ENCODE measurements at regions of chr6 and their contacts with region 1.

Region 1: DNA sequence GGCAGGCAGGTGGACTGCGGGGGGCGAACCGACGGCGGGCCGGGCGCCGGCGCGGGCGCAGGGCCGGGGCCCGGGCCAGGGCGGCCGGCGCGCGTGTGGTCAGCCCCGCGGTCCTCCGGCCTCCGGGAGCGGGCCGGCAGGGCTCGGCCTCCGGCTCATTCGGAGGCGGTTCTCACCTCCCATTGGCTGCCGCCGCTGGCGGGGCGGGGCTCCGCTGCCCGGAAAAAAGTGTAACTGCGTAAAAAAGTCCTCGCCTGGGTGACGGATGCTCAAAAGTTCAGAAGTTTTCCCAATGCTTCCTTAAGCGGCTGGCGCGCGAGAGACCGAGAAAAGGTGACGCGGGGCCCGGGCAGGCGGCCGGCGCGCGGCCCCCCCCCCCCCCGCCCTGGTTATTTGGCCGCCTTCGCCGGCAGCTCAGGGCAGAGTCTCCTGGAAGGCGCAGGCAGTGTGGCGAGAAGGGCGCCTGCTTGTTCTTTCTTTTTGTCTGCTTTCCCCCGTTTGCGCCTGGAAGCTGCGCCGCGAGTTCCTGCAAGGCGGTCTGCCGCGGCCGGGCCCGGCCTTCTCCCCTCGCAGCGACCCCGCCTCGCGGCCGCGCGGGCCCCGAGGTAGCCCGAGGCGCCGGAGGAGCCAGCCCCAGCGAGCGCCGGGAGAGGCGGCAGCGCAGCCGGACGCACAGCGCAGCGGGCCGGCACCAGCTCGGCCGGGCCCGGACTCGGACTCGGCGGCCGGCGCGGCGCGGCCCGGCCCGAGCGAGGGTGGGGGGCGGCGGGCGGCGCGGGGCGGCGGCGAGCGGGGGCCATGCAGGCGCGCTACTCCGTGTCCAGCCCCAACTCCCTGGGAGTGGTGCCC is at the start of gene FOXC1:
- DNase-seq: peak; percentile 64
- ATAC-seq: peak; percentile 56
- H3K4me3 ChIP-seq: peak within 1 kb of the TSS in 3 of 5 experiments; percentile 44 to 60 (median 54)
- H3K4me3 Mint-ChIP-seq: peak within 1 kb of the TSS; percentile 88
- H3K27ac ChIP-seq: no peak within 1 kb of the TSS
- H3K27ac Mint-ChIP-seq: peak within 1 kb of the TSS; percentile 81
- H3K4me1 ChIP-seq: peaks cover 65 to 79% of the 10 kb centered on the region in 2 donors
- H3K4me1 Mint-ChIP-seq: peaks cover 50% of the 10 kb centered on the region
- H3K27me3 ChIP-seq: peaks cover 0 to 75% (median 59%) of the 10 kb centered on the region in 4 experiments
- H3K27me3 Mint-ChIP-seq: peaks cover 58% of the 10 kb centered on the region
- CTCF ChIP-seq: no peak
- total RNA-seq, gene FOXC1: 0.39 and 0.52 TPM in 2 replicates

Region 2: GRCh38 chr6:1389369-1390132 is 220.3 kb before region 1 on chr6 and contains the start of gene FOXF2:
- CTCF ChIA-PET with region 1: no interaction called
- POLR2A ChIA-PET with region 1: no interaction called
- intact Hi-C with region 1: loop called (anchors 5 kb)
- DNase-seq: peak; percentile 35
- ATAC-seq: peak; percentile 22
- H3K4me3 ChIP-seq: peak within 1 kb of the TSS in 3 of 5 experiments; percentile 43 to 51 (median 46)
- H3K4me3 Mint-ChIP-seq: peak within 1 kb of the TSS; percentile 86
- H3K27ac ChIP-seq: no peak within 1 kb of the TSS
- H3K27ac Mint-ChIP-seq: no peak within 1 kb of the TSS
- H3K4me1 ChIP-seq: peaks cover 40 to 60% of the 10 kb centered on the region in 2 donors
- H3K4me1 Mint-ChIP-seq: peaks cover 33% of the 10 kb centered on the region
- H3K27me3 ChIP-seq: peaks cover 0 to 86% (median 61%) of the 10 kb centered on the region in 4 experiments
- H3K27me3 Mint-ChIP-seq: peaks cover 62% of the 10 kb centered on the region
- CTCF ChIP-seq: no peak
- total RNA-seq, gene FOXF2: not detected in 2 replicates

Region 3: GRCh38 chr6:1554476-1555310 is 55.2 kb before region 1 on chr6:
- CTCF ChIA-PET with region 1: no interaction called
- POLR2A ChIA-PET with region 1: no interaction called
- intact Hi-C with region 1: no loop called
- DNase-seq: peak; percentile 67
- ATAC-seq: peak; percentile 85
- H3K4me3 ChIP-seq: peak overlapping the region; percentile 14 to 62 (median 57)
- H3K4me3 Mint-ChIP-seq: peak overlapping the region; percentile 84
- H3K27ac ChIP-seq: peak overlapping the region; percentile 6 to 70
- H3K27ac Mint-ChIP-seq: peak overlapping the region; percentile 69
- H3K4me1 ChIP-seq: peaks cover 0 to 9% of the 10 kb centered on the region in 2 donors
- H3K4me1 Mint-ChIP-seq: peaks cover 10% of the 10 kb centered on the region
- H3K27me3 ChIP-seq: peaks cover 0 to 14% (median 6%) of the 10 kb centered on the region in 4 experiments
- H3K27me3 Mint-ChIP-seq: peaks cover 44% of the 10 kb centered on the region
- CTCF ChIP-seq: peak; percentile 62

Region 4: GRCh38 chr6:1624851-1625781 is 15.2 kb after region 1 on chr6:
- CTCF ChIA-PET with region 1: interaction called, 7 read pairs
- POLR2A ChIA-PET with region 1: no interaction called
- intact Hi-C with region 1: loop called (anchors 2 kb)
- DNase-seq: peak; percentile 59
- ATAC-seq: peak; percentile 34
- H3K4me3 ChIP-seq: peak overlapping the region; percentile 28 to 69 (median 37)
- H3K4me3 Mint-ChIP-seq: peak overlapping the region; percentile 88
- H3K27ac ChIP-seq: no peak overlapping the region
- H3K27ac Mint-ChIP-seq: no peak overlapping the region
- H3K4me1 ChIP-seq: peaks cover 28 to 32% of the 10 kb centered on the region in 2 donors
- H3K4me1 Mint-ChIP-seq: peaks cover 18% of the 10 kb centered on the region
- H3K27me3 ChIP-seq: peaks cover 0 to 80% (median 57%) of the 10 kb centered on the region in 4 experiments
- H3K27me3 Mint-ChIP-seq: peaks cover 65% of the 10 kb centered on the region
- CTCF ChIP-seq: no peak

Region 5: DNA sequence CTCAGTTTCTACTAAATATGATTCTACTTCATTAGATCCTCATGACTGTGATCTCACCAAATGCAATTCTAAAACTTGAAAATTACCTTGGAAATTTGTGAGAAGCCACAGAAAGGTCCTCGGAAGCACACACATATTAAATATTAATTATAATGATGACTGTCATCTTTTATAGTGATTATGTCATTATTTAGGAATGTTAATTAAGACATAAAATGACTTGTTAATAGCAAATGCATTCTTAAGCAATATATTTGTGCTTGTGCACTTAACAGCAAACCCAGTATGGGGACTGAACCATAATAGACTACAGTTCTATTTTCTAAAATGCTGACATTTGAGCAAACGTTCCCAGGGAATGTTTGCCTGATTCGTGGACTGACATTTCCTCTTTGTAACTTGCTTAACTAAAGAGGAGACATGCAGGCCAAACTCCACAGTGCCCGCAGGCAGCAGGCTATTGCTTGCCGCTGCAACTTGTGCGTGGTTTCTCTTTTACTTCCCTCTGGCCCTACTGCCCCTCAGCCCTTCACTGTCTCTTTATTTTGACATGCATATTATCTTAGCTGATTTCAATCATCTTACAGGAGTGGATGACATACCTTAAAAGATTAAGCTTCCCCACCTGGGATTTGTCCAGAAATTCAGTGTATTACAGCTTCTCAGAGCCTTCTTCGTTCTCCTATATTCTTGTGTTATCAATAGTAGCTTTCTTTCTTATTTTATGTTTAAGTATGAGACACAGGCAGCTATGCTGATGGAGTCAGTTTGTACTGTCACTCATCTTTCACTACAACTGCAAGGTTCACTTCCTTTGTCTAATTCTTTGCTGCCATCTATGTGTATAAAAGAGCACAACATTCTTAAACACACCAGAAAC is 494.0 kb after region 1 on chr6:
- CTCF ChIA-PET with region 1: interaction called, 18 read pairs
- POLR2A ChIA-PET with region 1: no interaction called
- intact Hi-C with region 1: no loop called
- DNase-seq: peak; percentile 50
- ATAC-seq: peak; percentile 36
- H3K4me3 ChIP-seq: no peak overlapping the region
- H3K4me3 Mint-ChIP-seq: no peak overlapping the region
- H3K27ac ChIP-seq: no peak overlapping the region
- H3K27ac Mint-ChIP-seq: no peak overlapping the region
- H3K4me1 ChIP-seq: no peaks in the 10 kb centered on the region
- H3K4me1 Mint-ChIP-seq: no peaks in the 10 kb centered on the region
- H3K27me3 ChIP-seq: no peaks in the 10 kb centered on the region
- H3K27me3 Mint-ChIP-seq: no peaks in the 10 kb centered on the region
- CTCF ChIP-seq: peak; percentile 77

Region 6: GRCh38 chr6:2353412-2354137 is 743.7 kb after region 1 on chr6:
- CTCF ChIA-PET with region 1: interaction called, 10 read pairs
- POLR2A ChIA-PET with region 1: no interaction called
- intact Hi-C with region 1: no loop called
- DNase-seq: peak; percentile 63
- ATAC-seq: no peak
- H3K4me3 ChIP-seq: no peak overlapping the region
- H3K4me3 Mint-ChIP-seq: no peak overlapping the region
- H3K27ac ChIP-seq: no peak overlapping the region
- H3K27ac Mint-ChIP-seq: no peak overlapping the region
- H3K4me1 ChIP-seq: no peaks in the 10 kb centered on the region
- H3K4me1 Mint-ChIP-seq: no peaks in the 10 kb centered on the region
- H3K27me3 ChIP-seq: no peaks in the 10 kb centered on the region
- H3K27me3 Mint-ChIP-seq: no peaks in the 10 kb centered on the region
- CTCF ChIP-seq: peak; percentile 87